B cell (primary cell): ENCODE measurements at regions of chr6 and their contacts with region 1.

Region 1: DNA sequence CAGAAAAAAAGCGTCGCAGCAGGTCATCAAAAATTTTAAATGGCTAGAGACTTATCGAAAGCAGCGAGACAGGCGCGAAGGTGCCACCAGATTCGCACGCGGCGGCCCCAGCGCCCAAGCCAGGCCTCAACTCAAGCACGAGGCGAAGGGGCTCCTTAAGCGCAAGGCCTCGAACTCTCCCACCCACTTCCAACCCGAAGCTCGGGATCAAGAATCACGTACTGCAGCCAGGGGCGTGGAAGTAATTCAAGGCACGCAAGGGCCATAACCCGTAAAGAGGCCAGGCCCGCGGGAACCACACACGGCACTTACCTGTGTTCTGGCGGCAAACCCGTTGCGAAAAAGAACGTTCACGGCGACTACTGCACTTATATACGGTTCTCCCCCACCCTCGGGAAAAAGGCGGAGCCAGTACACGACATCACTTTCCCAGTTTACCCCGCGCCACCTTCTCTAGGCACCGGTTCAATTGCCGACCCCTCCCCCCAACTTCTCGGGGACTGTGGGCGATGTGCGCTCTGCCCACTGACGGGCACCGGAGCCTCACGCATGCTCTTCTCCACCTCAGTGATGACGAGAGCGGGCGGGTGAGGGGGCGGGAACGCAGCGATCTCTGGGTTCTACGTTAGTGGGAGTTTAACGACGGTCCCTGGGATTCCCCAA is at the start of gene EEF1A1:
- DNase-seq: peak; percentile 100
- ATAC-seq: peak; percentile 82
- H3K4me3 ChIP-seq: peak within 1 kb of the TSS; percentile 87 to 100 (median 98)
- H3K4me3 Mint-ChIP-seq: peak within 1 kb of the TSS; percentile 97
- H3K27ac ChIP-seq: peak within 1 kb of the TSS; percentile 98 to 99
- H3K27ac Mint-ChIP-seq: peak within 1 kb of the TSS; percentile 95
- H3K4me1 ChIP-seq: peaks cover 53 to 67% of the 10 kb centered on the region in 2 donors
- H3K4me1 Mint-ChIP-seq: peaks cover 66% of the 10 kb centered on the region
- H3K27me3 ChIP-seq: no peaks in the 10 kb centered on the region
- H3K27me3 Mint-ChIP-seq: no peaks in the 10 kb centered on the region
- CTCF ChIP-seq: no peak
- total RNA-seq, gene EEF1A1: 12,449 and 12,769 TPM in 2 replicates

Region 2: DNA sequence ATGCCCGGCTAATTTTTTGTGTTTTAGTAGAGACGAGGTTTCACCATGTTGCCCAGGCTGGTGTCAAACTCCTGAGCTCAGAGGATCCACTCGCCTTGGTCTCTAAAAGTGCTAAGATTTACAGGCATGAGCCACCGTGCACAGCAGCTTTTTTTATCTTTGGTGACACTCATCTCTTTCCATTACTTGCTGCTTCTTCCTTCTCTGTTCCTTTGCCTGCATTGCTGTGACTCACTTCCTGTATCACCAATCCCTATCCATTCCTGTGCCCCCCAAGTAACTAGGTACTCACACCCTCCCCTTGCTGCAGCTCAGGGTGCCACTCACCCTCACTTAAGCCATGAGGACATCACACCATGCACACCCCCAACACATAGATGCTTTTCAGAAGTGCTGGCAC is 320.1 kb before region 1 on chr6:
- CTCF ChIA-PET with region 1: no interaction called
- POLR2A ChIA-PET with region 1: no interaction called
- intact Hi-C with region 1: no loop called
- DNase-seq: no peak
- ATAC-seq: no peak
- H3K4me3 ChIP-seq: no peak overlapping the region
- H3K4me3 Mint-ChIP-seq: no peak overlapping the region
- H3K27ac ChIP-seq: no peak overlapping the region
- H3K27ac Mint-ChIP-seq: no peak overlapping the region
- H3K4me1 ChIP-seq: no peaks in the 10 kb centered on the region
- H3K4me1 Mint-ChIP-seq: no peaks in the 10 kb centered on the region
- H3K27me3 ChIP-seq: no peaks in the 10 kb centered on the region
- H3K27me3 Mint-ChIP-seq: no peaks in the 10 kb centered on the region
- CTCF ChIP-seq: no peak

Region 3: GRCh38 chr6:73451223-73452107 is 69.4 kb before region 1 on chr6:
- CTCF ChIA-PET with region 1: interaction called, 5 read pairs
- POLR2A ChIA-PET with region 1: interaction called, 7 read pairs
- intact Hi-C with region 1: loop called (anchors 1 kb)
- DNase-seq: peak; percentile 82
- ATAC-seq: peak; percentile 56
- H3K4me3 ChIP-seq: peak overlapping the region; percentile 86 to 94 (median 91)
- H3K4me3 Mint-ChIP-seq: peak overlapping the region; percentile 95
- H3K27ac ChIP-seq: peak overlapping the region; percentile 87 to 89
- H3K27ac Mint-ChIP-seq: peak overlapping the region; percentile 91
- H3K4me1 ChIP-seq: peaks cover 16 to 25% of the 10 kb centered on the region in 2 donors
- H3K4me1 Mint-ChIP-seq: peaks cover 23% of the 10 kb centered on the region
- H3K27me3 ChIP-seq: no peaks in the 10 kb centered on the region
- H3K27me3 Mint-ChIP-seq: no peaks in the 10 kb centered on the region
- CTCF ChIP-seq: no peak

Region 4: DNA sequence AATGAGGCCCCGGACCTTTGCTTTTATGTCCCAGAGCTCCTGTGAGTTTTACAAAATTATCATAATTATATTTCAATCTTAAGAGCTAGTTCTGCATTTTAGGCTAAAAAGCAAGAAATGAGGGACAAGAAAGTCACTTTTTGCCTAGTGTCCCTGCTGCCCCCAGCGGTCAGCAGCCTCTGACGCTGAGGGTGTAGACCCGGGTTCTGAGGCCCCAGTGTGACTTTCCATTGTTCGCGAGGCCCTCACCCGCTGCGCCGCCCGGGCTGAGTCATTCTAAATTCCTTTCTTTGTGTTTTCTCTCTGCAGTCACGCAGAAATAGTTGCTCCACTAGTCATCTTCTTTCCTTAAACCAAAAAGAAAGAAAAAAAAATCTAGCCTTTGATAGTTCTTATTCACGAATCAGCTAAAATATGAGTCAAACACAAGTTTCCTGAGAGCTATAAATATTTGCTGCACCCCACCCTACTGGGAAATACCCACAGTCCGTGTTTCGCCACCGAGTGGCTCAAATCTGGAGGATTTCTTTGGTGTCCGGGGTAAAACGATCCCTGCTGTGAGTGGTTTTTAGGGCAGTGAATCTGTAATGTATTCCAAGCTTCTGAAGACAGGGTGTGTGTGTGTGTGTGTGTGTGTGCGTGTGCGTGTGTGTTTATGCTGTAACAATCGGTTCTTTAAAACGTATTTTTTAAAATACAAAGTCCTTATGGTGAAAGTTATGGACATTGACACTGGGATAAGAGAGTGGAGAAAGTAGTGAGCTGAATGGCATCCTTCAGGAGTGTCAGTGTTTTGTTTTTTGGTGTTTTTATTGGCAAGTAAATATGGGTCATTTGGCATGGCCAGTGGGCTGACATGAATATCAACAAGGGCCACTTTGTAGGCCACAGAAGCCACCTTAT is 59.7 kb after region 1 on chr6:
- CTCF ChIA-PET with region 1: interaction called, 22 read pairs
- POLR2A ChIA-PET with region 1: interaction called, 43 read pairs
- intact Hi-C with region 1: loop called (anchors 1 kb)
- DNase-seq: peak; percentile 80
- ATAC-seq: peak; percentile 79
- H3K4me3 ChIP-seq: peak overlapping the region in 4 of 5 experiments; percentile 31 to 55 (median 46)
- H3K4me3 Mint-ChIP-seq: peak overlapping the region; percentile 87
- H3K27ac ChIP-seq: peak overlapping the region; percentile 91 to 93
- H3K27ac Mint-ChIP-seq: peak overlapping the region; percentile 96
- H3K4me1 ChIP-seq: peaks cover 32 to 34% of the 10 kb centered on the region in 2 donors
- H3K4me1 Mint-ChIP-seq: peaks cover 32% of the 10 kb centered on the region
- H3K27me3 ChIP-seq: no peaks in the 10 kb centered on the region
- H3K27me3 Mint-ChIP-seq: no peaks in the 10 kb centered on the region
- CTCF ChIP-seq: peak; percentile 24

Region 5: GRCh38 chr6:73610444-73611275 is 89.8 kb after region 1 on chr6:
- CTCF ChIA-PET with region 1: interaction called, 261 read pairs
- POLR2A ChIA-PET with region 1: interaction called, 10 read pairs
- intact Hi-C with region 1: loop called (anchors 1 kb)
- DNase-seq: peak; percentile 73
- ATAC-seq: peak; percentile 63
- H3K4me3 ChIP-seq: no peak overlapping the region
- H3K4me3 Mint-ChIP-seq: no peak overlapping the region
- H3K27ac ChIP-seq: no peak overlapping the region
- H3K27ac Mint-ChIP-seq: no peak overlapping the region
- H3K4me1 ChIP-seq: peaks cover 0 to 5% of the 10 kb centered on the region in 2 donors
- H3K4me1 Mint-ChIP-seq: peaks cover 5% of the 10 kb centered on the region
- H3K27me3 ChIP-seq: no peaks in the 10 kb centered on the region
- H3K27me3 Mint-ChIP-seq: no peaks in the 10 kb centered on the region
- CTCF ChIP-seq: peak; percentile 81

Region 6: GRCh38 chr6:75284632-75285286 is 1763.9 kb after region 1 on chr6 and contains the start of gene TMEM30A:
- CTCF ChIA-PET with region 1: no interaction called
- POLR2A ChIA-PET with region 1: interaction called, 3 read pairs
- intact Hi-C with region 1: loop called (anchors 2 kb)
- DNase-seq: peak; percentile 98
- ATAC-seq: peak; percentile 96
- H3K4me3 ChIP-seq: peak within 1 kb of the TSS; percentile 76 to 96 (median 92)
- H3K4me3 Mint-ChIP-seq: no peak within 1 kb of the TSS
- H3K27ac ChIP-seq: peak within 1 kb of the TSS; percentile 78 to 94
- H3K27ac Mint-ChIP-seq: no peak within 1 kb of the TSS
- H3K4me1 ChIP-seq: peaks cover 15 to 28% of the 10 kb centered on the region in 2 donors
- H3K4me1 Mint-ChIP-seq: peaks cover 23% of the 10 kb centered on the region
- H3K27me3 ChIP-seq: no peaks in the 10 kb centered on the region
- H3K27me3 Mint-ChIP-seq: no peaks in the 10 kb centered on the region
- CTCF ChIP-seq: no peak
- total RNA-seq, gene TMEM30A: 53.9 and 55.3 TPM in 2 replicates